Activated CD4-positive, alpha-beta memory T cell treated with anti-CD3 and anti-CD28 coated beads for 36 hours (primary cell): ENCODE measurements at regions of chr1 and their contacts with region 1.

Region 1: GRCh38 chr1:55215256-55216021 is at the start of gene USP24:
- DNase-seq: peak; percentile 85
- H3K4me3 Mint-ChIP-seq: peak within 1 kb of the TSS; percentile 94
- H3K27ac Mint-ChIP-seq: peak within 1 kb of the TSS; percentile 94
- H3K4me1 Mint-ChIP-seq: peaks cover 52% of the 10 kb centered on the region
- H3K27me3 Mint-ChIP-seq: no peaks in the 10 kb centered on the region
- total RNA-seq, gene USP24: 37.4 to 39.9 TPM

Region 2: GRCh38 chr1:55150880-55151588 is 64.4 kb before region 1 on chr1:
- CTCF ChIA-PET with region 1: no interaction called
- POLR2A ChIA-PET with region 1: no interaction called
- intact Hi-C with region 1: loop called (anchors 2 kb)
- DNase-seq: no peak
- H3K4me3 Mint-ChIP-seq: peak overlapping the region; percentile 49
- H3K27ac Mint-ChIP-seq: peak overlapping the region; percentile 89
- H3K4me1 Mint-ChIP-seq: peaks cover 30% of the 10 kb centered on the region
- H3K27me3 Mint-ChIP-seq: no peaks in the 10 kb centered on the region

Region 3: GRCh38 chr1:55164906-55165305 is 50.5 kb before region 1 on chr1:
- CTCF ChIA-PET with region 1: no interaction called
- POLR2A ChIA-PET with region 1: no interaction called
- intact Hi-C with region 1: loop called (anchors 1 kb)
- DNase-seq: no peak
- H3K4me3 Mint-ChIP-seq: no peak overlapping the region
- H3K27ac Mint-ChIP-seq: peak overlapping the region; percentile 69
- H3K4me1 Mint-ChIP-seq: peaks cover 41% of the 10 kb centered on the region
- H3K27me3 Mint-ChIP-seq: no peaks in the 10 kb centered on the region

Region 4: GRCh38 chr1:55204997-55205396 is 10.4 kb before region 1 on chr1:
- CTCF ChIA-PET with region 1: interaction called, 5 read pairs
- POLR2A ChIA-PET with region 1: interaction called, 7 read pairs
- intact Hi-C with region 1: loop called (anchors 1 kb)
- DNase-seq: peak; percentile 33
- H3K4me3 Mint-ChIP-seq: no peak overlapping the region
- H3K27ac Mint-ChIP-seq: peak overlapping the region; percentile 47
- H3K4me1 Mint-ChIP-seq: peaks cover 72% of the 10 kb centered on the region
- H3K27me3 Mint-ChIP-seq: no peaks in the 10 kb centered on the region

Region 5: DNA sequence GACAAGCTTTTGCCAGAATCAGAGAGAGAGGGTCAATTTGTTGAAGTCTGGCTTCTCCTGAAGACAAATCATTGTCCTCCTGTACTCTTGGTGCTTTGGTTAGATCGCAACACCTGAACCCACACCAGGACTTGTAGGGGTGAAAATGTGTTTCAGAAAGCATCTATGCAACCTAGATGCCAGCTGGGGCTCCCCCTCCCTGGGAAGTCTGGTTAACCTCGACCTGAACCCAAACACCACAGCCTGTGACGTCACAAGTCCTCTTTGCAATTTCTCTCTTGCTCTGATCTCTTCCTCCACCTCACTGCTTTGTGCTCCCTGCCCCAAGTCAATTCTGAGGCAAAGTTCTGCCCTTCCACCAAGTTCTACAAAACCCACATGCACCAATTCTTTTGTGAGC is 42.5 kb after region 1 on chr1:
- CTCF ChIA-PET with region 1: no interaction called
- POLR2A ChIA-PET with region 1: no interaction called
- intact Hi-C with region 1: loop called (anchors 5 kb)
- DNase-seq: peak; percentile 77
- H3K4me3 Mint-ChIP-seq: no peak overlapping the region
- H3K27ac Mint-ChIP-seq: peak overlapping the region; percentile 36
- H3K4me1 Mint-ChIP-seq: peaks cover 11% of the 10 kb centered on the region
- H3K27me3 Mint-ChIP-seq: no peaks in the 10 kb centered on the region